ENCODE measurements at regions of chr19 and their contacts with region 1.

Region 1: GRCh38 chr19:10952809-10953208 is 8.0 kb upstream of the SMARCA4 start:
- DNase-seq: no peak
- ATAC-seq: no peak
- H3K4me3 ChIP-seq: no peak overlapping the region
- H3K27ac ChIP-seq: no peak overlapping the region
- H3K4me1 ChIP-seq: peaks cover 10% of the 10 kb centered on the region
- H3K27me3 ChIP-seq: no peaks in the 10 kb centered on the region
- CTCF ChIP-seq: no peak
- EP300 ChIP-seq: no peak
- POLR2A ChIP-seq: no peak
- RAD21 ChIP-seq: no peak

Region 2: DNA sequence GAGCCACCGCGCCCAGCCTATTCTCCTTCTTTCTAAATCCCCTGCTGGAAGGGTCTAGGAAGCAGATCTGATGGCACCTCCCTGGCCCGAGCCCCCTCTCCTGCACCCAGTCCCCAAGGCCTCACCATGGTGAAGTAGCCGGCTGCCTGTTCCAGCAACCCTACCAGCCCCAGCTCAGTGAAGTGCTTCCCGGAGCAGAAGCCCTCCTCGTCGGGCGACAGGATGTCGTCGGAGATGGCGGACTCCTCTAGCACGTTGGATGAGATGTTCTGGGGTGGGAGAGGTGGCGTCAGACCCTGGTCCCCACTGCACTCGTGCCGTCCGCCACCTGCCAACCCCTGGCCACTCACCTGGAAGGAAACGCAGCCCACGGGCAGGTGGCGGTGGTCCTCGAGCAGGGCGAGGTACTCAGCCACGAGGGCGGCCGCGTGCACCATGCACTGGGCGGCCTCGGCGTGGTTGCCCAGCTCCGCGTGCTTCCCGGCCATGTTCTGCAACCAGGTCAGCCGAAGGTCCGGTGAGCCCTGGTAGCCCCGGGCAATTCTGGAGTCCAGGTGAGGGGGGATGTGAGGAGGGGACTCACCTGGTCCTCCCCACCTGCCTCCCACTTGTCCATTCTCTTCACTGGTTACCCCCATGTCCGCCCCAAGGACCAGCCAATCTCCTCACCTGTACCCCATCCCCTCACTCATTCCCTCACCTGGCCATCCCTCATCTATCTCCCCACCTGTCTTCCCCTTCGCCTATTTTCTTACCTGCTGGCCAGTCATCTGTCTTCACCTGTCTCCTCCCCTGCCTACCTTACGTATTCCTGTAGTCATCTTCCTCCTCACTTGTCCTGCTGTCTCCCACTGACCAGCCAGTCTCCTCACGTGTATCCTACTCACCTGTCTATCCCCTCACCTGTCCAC is 256.0 kb after region 1 on chr19:
- CTCF ChIA-PET with region 1: no interaction called
- POLR2A ChIA-PET with region 1: interaction called, 10 read pairs
- RAD21 ChIA-PET with region 1: no interaction called
- SMC1A ChIA-PET with region 1: no interaction called
- in situ Hi-C with region 1: no loop called
- intact Hi-C with region 1: no loop called
- DNase-seq: no peak
- ATAC-seq: no peak
- H3K4me3 ChIP-seq: no peak overlapping the region
- H3K27ac ChIP-seq: no peak overlapping the region
- H3K4me1 ChIP-seq: peaks cover 11% of the 10 kb centered on the region
- H3K27me3 ChIP-seq: no peaks in the 10 kb centered on the region
- CTCF ChIP-seq: no peak
- EP300 ChIP-seq: no peak
- POLR2A ChIP-seq: no peak
- RAD21 ChIP-seq: no peak